Heart left ventricle (tissue), 16 donors: ENCODE measurements at regions of chr9 and their contacts with region 1.

Region 1: GRCh38 chr9:114611516-114612271 is 603 bp downstream of the TMEM268 start:
- DNase-seq: peak; percentile 51 to 82 (median 69)
- ATAC-seq: peak in 3 of 4 donors; percentile 75 to 89 (median 86)
- H3K4me3 ChIP-seq: peak overlapping the region; percentile 44 to 95 (median 74)
- H3K27ac ChIP-seq: peak overlapping the region; percentile 41 to 94 (median 76)
- H3K4me1 ChIP-seq: peaks cover 0 to 41% (median 16%) of the 10 kb centered on the region in 12 donors
- H3K27me3 ChIP-seq: no peaks in the 10 kb centered on the region
- CTCF ChIP-seq: no peak
- POLR2A ChIP-seq: no peak

Region 2: DNA sequence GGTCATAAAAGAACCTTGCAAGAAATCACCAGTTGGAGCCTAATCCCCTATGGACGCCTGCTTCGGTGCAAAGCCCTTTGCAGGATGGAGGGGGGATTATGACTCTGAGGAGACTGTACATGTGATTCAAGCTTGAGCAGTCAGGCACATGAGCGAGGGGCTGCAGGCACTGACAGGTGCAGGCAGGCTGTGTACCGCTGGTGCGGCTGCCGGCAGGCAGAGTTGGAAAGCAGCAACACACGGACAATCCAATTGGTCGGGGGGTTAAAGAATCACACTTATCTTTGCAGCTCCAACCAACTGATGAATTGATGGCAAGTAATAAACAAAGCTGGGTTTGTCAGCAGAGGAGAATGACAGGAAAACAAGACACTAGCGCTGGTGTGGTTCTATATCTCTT is 112.2 kb before region 1 on chr9:
- intact Hi-C with region 1: loop called in 1 of 10 experiments (anchors 10 kb)
- DNase-seq: no peak
- ATAC-seq: no peak
- H3K4me3 ChIP-seq: no peak overlapping the region
- H3K27ac ChIP-seq: no peak overlapping the region
- H3K4me1 ChIP-seq: peaks cover 0 to 6% (median 0%) of the 10 kb centered on the region in 12 donors
- H3K27me3 ChIP-seq: peaks cover 0 to 43% (median 10%) of the 10 kb centered on the region in 9 donors
- CTCF ChIP-seq: no peak
- POLR2A ChIP-seq: no peak

Region 3: GRCh38 chr9:114551883-114552685 is 59.6 kb before region 1 on chr9:
- intact Hi-C with region 1: no loop called
- DNase-seq: peak in 4 of 5 donors; percentile 55 to 78 (median 60)
- ATAC-seq: peak in 3 of 4 donors; percentile 58 to 99 (median 95)
- H3K4me3 ChIP-seq: no peak overlapping the region
- H3K27ac ChIP-seq: no peak overlapping the region
- H3K4me1 ChIP-seq: peaks cover 0 to 9% (median 0%) of the 10 kb centered on the region in 12 donors
- H3K27me3 ChIP-seq: peaks cover 0 to 13% (median 0%) of the 10 kb centered on the region in 9 donors
- CTCF ChIP-seq: no peak
- POLR2A ChIP-seq: no peak

Region 4: GRCh38 chr9:114759512-114760341 is 148.0 kb after region 1 on chr9:
- intact Hi-C with region 1: no loop called
- DNase-seq: no peak
- ATAC-seq: peak in 2 of 4 donors; percentile 30 to 32
- H3K4me3 ChIP-seq: no peak overlapping the region
- H3K27ac ChIP-seq: no peak overlapping the region
- H3K4me1 ChIP-seq: no peaks in the 10 kb centered on the region
- H3K27me3 ChIP-seq: peaks cover 0 to 6% (median 0%) of the 10 kb centered on the region in 9 donors
- CTCF ChIP-seq: no peak
- POLR2A ChIP-seq: no peak

Region 5: GRCh38 chr9:114894801-114895433 is 283.2 kb after region 1 on chr9:
- intact Hi-C with region 1: no loop called
- DNase-seq: peak in 2 of 5 donors; percentile 16 to 34
- ATAC-seq: peak in 3 of 4 donors; percentile 87 to 94 (median 90)
- H3K4me3 ChIP-seq: no peak overlapping the region
- H3K27ac ChIP-seq: peak overlapping the region in 8 of 12 donors; percentile 3 to 62 (median 34)
- H3K4me1 ChIP-seq: peaks cover 0 to 65% (median 10%) of the 10 kb centered on the region in 12 donors
- H3K27me3 ChIP-seq: no peaks in the 10 kb centered on the region
- CTCF ChIP-seq: no peak
- POLR2A ChIP-seq: no peak